GM12878 (cell line): ENCODE measurements at regions of chr9 and their contacts with region 1.

Region 1: GRCh38 chr9:3441197-3441816 is 84.5 kb downstream of the RFX3 start:
- DNase-seq: peak; percentile 24
- ATAC-seq: peak; percentile 99
- H3K4me3 ChIP-seq: no peak overlapping the region
- H3K27ac ChIP-seq: no peak overlapping the region
- H3K4me1 ChIP-seq: no peaks in the 10 kb centered on the region
- H3K27me3 ChIP-seq: no peaks in the 10 kb centered on the region
- CTCF ChIP-seq: peak; percentile 40 to 72 (median 72)
- EP300 ChIP-seq: no peak
- POLR2A ChIP-seq: no peak
- RAD21 ChIP-seq: peak; percentile 76

Region 2: GRCh38 chr9:3049636-3050035 is 391.7 kb before region 1 on chr9:
- CTCF ChIA-PET with region 1: no interaction called
- POLR2A ChIA-PET with region 1: no interaction called
- RAD21 ChIA-PET with region 1: no interaction called
- SMC1A ChIA-PET with region 1: no interaction called
- in situ Hi-C with region 1: no loop called
- intact Hi-C with region 1: no loop called
- DNase-seq: no peak
- ATAC-seq: no peak
- H3K4me3 ChIP-seq: no peak overlapping the region
- H3K27ac ChIP-seq: no peak overlapping the region
- H3K4me1 ChIP-seq: no peaks in the 10 kb centered on the region
- H3K27me3 ChIP-seq: no peaks in the 10 kb centered on the region; a peak in 1 of 4 replicates
- CTCF ChIP-seq: no peak
- EP300 ChIP-seq: no peak
- POLR2A ChIP-seq: no peak
- RAD21 ChIP-seq: no peak

Region 3: DNA sequence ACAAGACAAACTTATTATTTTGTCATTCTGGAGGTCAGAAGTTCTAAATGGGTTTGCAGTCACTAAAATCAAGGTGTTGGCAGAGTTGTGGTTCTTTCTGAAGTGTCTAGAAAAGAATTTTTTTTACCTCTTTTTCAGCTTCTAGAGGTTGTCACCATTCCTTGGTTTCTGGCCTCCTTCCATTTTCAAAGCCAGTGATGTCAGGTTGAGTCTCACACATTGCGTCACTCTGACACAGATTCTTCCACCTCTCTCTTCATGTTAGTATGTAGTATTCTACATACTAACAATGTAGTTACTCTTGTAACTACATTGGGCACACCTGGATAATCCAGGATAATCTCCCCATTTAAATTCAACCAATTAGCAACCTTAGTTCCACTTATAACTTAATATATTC is 205.8 kb before region 1 on chr9:
- CTCF ChIA-PET with region 1: interaction called, 305 read pairs
- POLR2A ChIA-PET with region 1: no interaction called
- RAD21 ChIA-PET with region 1: interaction called, 118 read pairs
- SMC1A ChIA-PET with region 1: interaction called, 136 read pairs
- in situ Hi-C with region 1: loop called (anchors 5 kb)
- intact Hi-C with region 1: loop called (anchors 1 kb)
- DNase-seq: no peak
- ATAC-seq: no peak
- H3K4me3 ChIP-seq: no peak overlapping the region
- H3K27ac ChIP-seq: no peak overlapping the region
- H3K4me1 ChIP-seq: no peaks in the 10 kb centered on the region
- H3K27me3 ChIP-seq: no peaks in the 10 kb centered on the region
- CTCF ChIP-seq: no peak
- EP300 ChIP-seq: no peak
- POLR2A ChIP-seq: no peak
- RAD21 ChIP-seq: no peak

Region 4: GRCh38 chr9:3261484-3261883 is 179.8 kb before region 1 on chr9:
- CTCF ChIA-PET with region 1: interaction called, 4 read pairs
- POLR2A ChIA-PET with region 1: no interaction called
- RAD21 ChIA-PET with region 1: no interaction called
- SMC1A ChIA-PET with region 1: interaction called, 11 read pairs
- in situ Hi-C with region 1: no loop called
- intact Hi-C with region 1: no loop called
- DNase-seq: no peak
- ATAC-seq: no peak
- H3K4me3 ChIP-seq: no peak overlapping the region
- H3K27ac ChIP-seq: no peak overlapping the region
- H3K4me1 ChIP-seq: peaks cover 4% of the 10 kb centered on the region; the same call in 1 of the 2 replicates
- H3K27me3 ChIP-seq: no peaks in the 10 kb centered on the region
- CTCF ChIP-seq: no peak
- EP300 ChIP-seq: no peak
- POLR2A ChIP-seq: no peak
- RAD21 ChIP-seq: no peak

Region 5: DNA sequence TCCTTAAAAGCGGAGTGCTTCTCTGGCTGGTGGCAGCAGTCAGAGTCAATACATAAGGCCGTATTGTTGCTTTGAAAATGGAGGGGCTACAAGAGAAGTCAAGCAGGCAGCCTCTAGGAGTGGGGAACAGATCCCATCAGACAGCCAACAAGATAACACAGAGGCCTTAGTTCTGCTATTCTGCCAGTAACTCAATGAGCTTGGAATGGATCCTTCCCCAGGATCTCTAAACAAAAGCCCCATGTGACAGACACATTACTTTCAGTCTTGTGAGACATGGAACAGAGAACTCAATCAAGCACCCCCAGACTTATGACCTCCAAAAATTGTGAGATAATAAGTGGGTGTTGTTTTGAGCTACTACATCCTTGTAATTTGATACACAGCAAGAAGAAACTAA is 74.1 kb before region 1 on chr9:
- CTCF ChIA-PET with region 1: interaction called, 12 read pairs
- POLR2A ChIA-PET with region 1: no interaction called
- RAD21 ChIA-PET with region 1: no interaction called
- SMC1A ChIA-PET with region 1: interaction called, 3 read pairs
- in situ Hi-C with region 1: no loop called
- intact Hi-C with region 1: no loop called
- DNase-seq: no peak
- ATAC-seq: no peak
- H3K4me3 ChIP-seq: no peak overlapping the region
- H3K27ac ChIP-seq: no peak overlapping the region
- H3K4me1 ChIP-seq: no peaks in the 10 kb centered on the region
- H3K27me3 ChIP-seq: no peaks in the 10 kb centered on the region
- CTCF ChIP-seq: no peak
- EP300 ChIP-seq: no peak
- POLR2A ChIP-seq: no peak
- RAD21 ChIP-seq: no peak

Region 6: GRCh38 chr9:3451956-3452355 is 10.6 kb after region 1 on chr9:
- CTCF ChIA-PET with region 1: interaction called, 24 read pairs
- POLR2A ChIA-PET with region 1: no interaction called
- RAD21 ChIA-PET with region 1: interaction called, 5 read pairs
- SMC1A ChIA-PET with region 1: interaction called, 23 read pairs
- in situ Hi-C with region 1: no loop called
- intact Hi-C with region 1: no loop called
- DNase-seq: no peak
- ATAC-seq: no peak
- H3K4me3 ChIP-seq: no peak overlapping the region
- H3K27ac ChIP-seq: no peak overlapping the region
- H3K4me1 ChIP-seq: no peaks in the 10 kb centered on the region
- H3K27me3 ChIP-seq: no peaks in the 10 kb centered on the region
- CTCF ChIP-seq: no peak
- EP300 ChIP-seq: no peak
- POLR2A ChIP-seq: no peak
- RAD21 ChIP-seq: no peak